SK-N-SH (cell line): ENCODE measurements at regions of chr1 and their contacts with region 1.

Region 1: DNA sequence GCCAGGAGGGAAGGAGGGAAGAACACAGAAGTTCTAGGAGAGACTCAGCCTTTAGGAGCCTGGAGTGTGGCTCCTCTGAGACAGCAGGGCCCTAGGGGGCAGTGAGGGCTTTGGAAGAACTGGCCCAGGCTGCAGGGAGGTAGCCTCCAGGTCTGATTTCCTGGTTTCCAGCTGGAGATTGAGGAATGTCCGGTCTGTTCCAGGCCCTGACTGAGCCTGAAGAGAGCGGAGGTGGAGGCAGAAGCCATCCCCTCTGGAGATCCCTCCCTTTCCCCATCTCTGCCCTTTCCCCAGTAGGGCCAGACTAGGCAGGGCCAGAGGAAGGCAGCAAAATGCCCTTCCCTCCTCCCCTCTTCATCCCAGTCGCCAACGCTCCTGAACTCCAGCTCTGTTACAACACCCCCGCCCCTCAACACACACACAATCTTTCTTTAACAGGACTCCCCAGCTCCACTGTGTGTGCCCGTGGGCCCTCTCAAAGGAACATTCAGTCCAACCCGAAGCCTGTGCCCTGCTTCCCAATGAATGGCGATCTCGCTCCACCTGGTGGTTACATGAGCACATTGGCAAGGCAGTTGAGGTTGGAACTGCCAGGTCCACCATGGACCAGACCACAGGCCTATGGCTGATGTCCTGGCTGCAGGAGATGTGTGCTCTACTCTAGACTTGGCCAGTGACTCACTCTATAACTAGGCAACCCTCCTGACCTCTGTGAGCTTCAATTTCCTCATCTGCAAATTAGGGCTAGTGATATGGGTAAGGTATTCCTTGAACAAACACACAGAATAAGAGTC is 32.0 kb downstream of the MAP7D1 start:
- DNase-seq: peak; percentile 86
- H3K4me3 ChIP-seq: no peak overlapping the region; a peak in 1 of 4 replicates
- H3K27ac ChIP-seq: peak overlapping the region; percentile 67 to 71
- H3K4me1 ChIP-seq: peaks cover 0 to 8% of the 10 kb centered on the region in 2 experiments; a peak in 1 of 4 replicates
- H3K27me3 ChIP-seq: no peaks in the 10 kb centered on the region
- CTCF ChIP-seq: peak; percentile 84
- EP300 ChIP-seq: no peak
- RAD21 ChIP-seq: peak; percentile 96

Region 2: GRCh38 chr1:36083993-36084738 is 103.8 kb before region 1 on chr1 and contains the start of gene TEKT2:
- CTCF ChIA-PET with region 1: no interaction called
- POLR2A ChIA-PET with region 1: no interaction called
- DNase-seq: peak; percentile 96
- H3K4me3 ChIP-seq: peak within 1 kb of the TSS; percentile 54 to 57
- H3K27ac ChIP-seq: peak within 1 kb of the TSS in 1 of 2 experiments; percentile 58; a peak in 1 of 4 replicates
- H3K4me1 ChIP-seq: peaks cover 0 to 14% of the 10 kb centered on the region in 2 experiments; a peak in 1 of 4 replicates
- H3K27me3 ChIP-seq: no peaks in the 10 kb centered on the region
- CTCF ChIP-seq: 0 out of 2 replicates have a peak, but pooled peaks have one; percentile 7
- EP300 ChIP-seq: no peak
- RAD21 ChIP-seq: no peak
- polyA plus RNA-seq, gene TEKT2: 1.0 and 1.2 TPM in 2 replicates

Region 3: DNA sequence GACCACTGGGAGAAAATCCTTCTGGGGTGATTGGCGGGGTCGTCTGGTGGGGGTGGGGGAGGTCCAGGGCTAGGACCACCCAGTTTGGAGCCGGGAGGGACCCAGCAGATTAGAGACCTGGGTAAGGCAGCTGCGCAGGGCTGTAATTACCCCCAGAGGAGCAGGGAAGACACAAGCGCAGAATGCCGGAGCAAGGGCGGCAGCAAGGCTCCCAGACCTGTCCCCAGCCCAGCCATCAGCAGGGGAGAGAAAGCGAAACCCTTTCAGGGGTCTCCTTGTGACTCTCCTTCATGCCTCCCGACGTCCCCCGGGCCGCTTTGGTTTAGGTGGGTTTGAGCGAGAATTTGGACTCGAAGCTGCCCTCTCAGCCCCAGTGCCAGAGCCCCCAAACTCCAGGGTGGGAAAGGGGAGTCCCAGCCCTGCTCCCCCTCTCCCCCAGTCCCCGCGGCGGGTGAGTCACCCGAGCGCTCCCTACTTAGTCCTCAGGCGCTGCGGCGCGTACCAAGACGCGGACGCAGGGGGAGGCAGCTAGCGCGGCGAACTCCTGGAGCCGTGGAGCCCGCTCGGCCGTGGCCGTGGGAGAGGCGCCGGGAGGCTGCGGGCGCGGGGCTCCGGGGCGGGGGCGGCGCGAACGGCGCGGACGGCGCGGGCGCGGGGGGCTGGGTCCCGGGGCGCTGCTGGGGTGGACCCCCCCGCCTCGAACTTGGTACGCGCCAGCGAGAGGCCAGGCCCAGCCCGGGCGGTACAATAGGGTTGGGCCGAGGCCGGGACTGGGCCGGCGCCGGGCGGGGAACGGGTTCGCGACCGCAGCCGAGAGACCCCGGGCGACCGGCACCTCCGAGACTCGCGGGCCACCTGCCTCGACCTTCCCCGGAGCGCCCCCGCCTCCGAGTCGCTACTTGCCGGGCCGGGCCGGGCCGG is 32.3 kb before region 1 on chr1 and contains the start of gene MAP7D1:
- CTCF ChIA-PET with region 1: interaction called, 143 read pairs
- POLR2A ChIA-PET with region 1: interaction called, 13 read pairs
- DNase-seq: peak; percentile 94
- H3K4me3 ChIP-seq: peak within 1 kb of the TSS; percentile 87 to 99
- H3K27ac ChIP-seq: peak within 1 kb of the TSS; percentile 90 to 98
- H3K4me1 ChIP-seq: peaks cover 39 to 46% of the 10 kb centered on the region in 2 experiments
- H3K27me3 ChIP-seq: no peaks in the 10 kb centered on the region
- CTCF ChIP-seq: no peak
- EP300 ChIP-seq: no peak
- RAD21 ChIP-seq: no peak
- polyA plus RNA-seq, gene MAP7D1: 40.6 and 69.9 TPM in 2 replicates

Region 4: DNA sequence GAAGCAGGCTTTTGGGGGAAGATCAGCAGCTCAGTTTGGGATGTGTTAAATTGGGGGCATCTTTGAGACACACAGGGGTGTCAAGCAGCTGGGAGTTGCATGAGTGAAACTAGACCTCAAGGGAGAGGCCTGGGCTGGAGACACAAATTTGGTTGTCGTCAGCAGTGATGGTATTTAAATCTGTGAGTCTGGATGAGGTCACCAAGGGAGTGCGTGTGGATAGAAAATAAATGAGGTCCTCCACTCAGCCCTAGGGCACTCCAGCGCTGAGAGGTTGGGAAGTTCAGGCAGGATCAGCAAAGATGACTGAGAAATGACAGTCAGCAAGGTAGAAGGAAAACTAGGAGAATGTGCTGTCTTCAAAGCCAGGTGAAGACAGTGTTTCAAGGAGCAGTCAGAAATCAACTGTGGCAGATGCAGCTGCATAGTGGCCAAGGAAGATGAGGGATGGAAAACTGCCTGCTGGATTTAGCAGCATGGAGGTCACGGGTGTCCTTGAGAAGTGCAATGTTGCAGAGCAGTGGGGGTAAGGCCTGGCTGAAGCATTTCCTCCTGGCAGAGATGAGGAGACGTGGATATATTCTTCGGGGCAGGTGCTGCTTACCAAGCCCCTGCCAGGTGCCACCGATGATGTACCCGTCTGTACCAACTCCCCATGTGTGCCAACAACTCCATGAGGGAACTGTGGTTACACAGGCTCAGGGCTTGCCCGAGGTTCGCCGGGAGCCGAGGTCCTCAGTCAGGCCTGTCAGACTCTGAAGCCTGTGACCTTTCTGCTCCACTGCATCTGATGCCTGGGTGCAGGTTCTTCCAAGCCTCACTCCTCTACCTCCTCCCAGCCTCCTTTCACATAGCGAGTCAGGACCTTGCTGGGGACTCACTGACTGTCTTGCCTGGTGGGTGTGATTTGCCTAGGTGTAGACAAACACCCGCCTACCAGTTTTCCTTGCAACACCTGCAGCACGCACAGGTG is 20.8 kb before region 1 on chr1:
- CTCF ChIA-PET with region 1: interaction called, 42 read pairs
- POLR2A ChIA-PET with region 1: interaction called, 3 read pairs
- DNase-seq: no peak
- H3K4me3 ChIP-seq: no peak overlapping the region
- H3K27ac ChIP-seq: no peak overlapping the region
- H3K4me1 ChIP-seq: peaks cover 5 to 17% of the 10 kb centered on the region in 2 experiments; a peak in 2 of 4 replicates
- H3K27me3 ChIP-seq: no peaks in the 10 kb centered on the region
- CTCF ChIP-seq: no peak
- EP300 ChIP-seq: no peak
- RAD21 ChIP-seq: no peak

Region 5: GRCh38 chr1:36199934-36200741 is 12.1 kb after region 1 on chr1:
- CTCF ChIA-PET with region 1: interaction called, 30 read pairs
- POLR2A ChIA-PET with region 1: no interaction called
- DNase-seq: no peak
- H3K4me3 ChIP-seq: no peak overlapping the region
- H3K27ac ChIP-seq: no peak overlapping the region
- H3K4me1 ChIP-seq: peaks cover 7 to 14% of the 10 kb centered on the region in 2 experiments; a peak in 1 of 4 replicates
- H3K27me3 ChIP-seq: no peaks in the 10 kb centered on the region
- CTCF ChIP-seq: no peak
- EP300 ChIP-seq: no peak
- RAD21 ChIP-seq: no peak